ENCODE measurements at regions of chr18 and their contacts with region 1.

Region 1: DNA sequence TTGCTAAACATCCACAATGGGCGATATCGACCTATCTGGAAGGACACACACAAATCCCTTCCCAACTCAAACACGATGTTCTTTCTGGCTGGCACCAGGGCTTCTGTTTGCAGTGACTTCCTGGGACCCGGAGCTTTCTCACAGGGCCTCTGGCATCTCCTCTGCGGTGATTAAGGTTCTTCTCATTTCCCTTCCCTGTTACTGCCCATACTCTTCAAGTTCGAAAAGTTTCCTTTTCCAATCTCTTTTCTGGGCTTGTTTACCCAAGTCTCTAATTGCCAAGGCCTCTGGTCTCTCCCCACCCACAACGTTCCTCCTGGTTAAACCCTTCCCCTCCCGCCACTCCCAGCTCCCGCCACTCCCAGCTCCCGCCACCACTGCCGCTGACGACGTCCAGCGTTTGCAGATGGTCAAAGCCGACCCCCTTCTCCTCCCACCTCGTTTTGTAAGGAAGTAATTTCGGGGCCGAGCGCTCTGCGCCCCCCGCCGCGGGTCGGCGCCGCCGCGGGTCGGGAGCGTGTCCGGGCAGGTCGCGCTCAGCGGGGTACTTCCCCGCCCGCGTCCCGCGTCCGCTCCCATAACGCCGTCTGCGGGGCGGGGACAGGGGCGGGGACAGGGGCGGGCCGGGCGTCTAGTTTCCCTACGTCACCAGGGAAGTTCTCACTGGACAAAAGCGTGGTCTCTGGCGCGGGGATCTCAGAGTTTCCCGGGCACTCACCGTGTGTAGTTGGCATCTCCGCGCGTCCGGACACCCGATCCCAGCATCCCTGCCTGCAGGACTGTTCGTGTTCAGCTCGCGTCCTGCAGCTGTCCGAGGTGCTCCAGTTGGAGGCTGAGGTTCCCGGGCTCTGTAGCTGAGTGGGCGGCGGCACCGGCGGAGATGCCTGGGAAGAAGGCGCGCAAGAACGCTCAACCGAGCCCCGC is at the start of gene PMAIP1:
- DNase-seq: peak; percentile 96
- H3K4me3 Mint-ChIP-seq: peak within 1 kb of the TSS; percentile 96
- H3K27ac Mint-ChIP-seq: peak within 1 kb of the TSS; percentile 99
- H3K4me1 Mint-ChIP-seq: peaks cover 16% of the 10 kb centered on the region
- H3K27me3 Mint-ChIP-seq: no peaks in the 10 kb centered on the region
- CTCF ChIP-seq: no peak
- total RNA-seq, gene PMAIP1: 21.7 and 28.0 TPM in 2 replicates

Region 2: DNA sequence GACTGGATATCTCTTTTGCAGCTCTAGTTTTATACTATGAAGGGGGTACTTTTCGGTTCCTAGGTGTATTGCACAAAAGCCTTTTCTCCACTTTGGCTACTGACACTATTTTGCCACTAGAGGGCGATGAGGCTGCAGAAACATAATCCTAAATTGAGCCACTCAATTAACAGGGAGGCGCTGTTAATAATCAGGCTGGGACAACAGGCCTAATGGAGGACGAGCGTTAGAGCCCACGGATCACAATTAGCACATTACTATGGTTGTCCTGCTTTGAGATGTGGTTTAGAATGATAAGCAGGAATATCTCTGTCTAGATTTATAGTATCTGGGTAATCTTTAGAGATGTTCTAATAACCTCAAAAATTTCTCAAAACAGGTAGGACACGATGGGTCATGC is 62.0 kb before region 1 on chr18:
- CTCF ChIA-PET with region 1: interaction called, 21 read pairs
- POLR2A ChIA-PET with region 1: interaction called, 31 read pairs
- intact Hi-C with region 1: loop called (anchors 1 kb)
- DNase-seq: peak; percentile 82
- H3K4me3 Mint-ChIP-seq: no peak overlapping the region
- H3K27ac Mint-ChIP-seq: no peak overlapping the region
- H3K4me1 Mint-ChIP-seq: peaks cover 1% of the 10 kb centered on the region
- H3K27me3 Mint-ChIP-seq: no peaks in the 10 kb centered on the region
- CTCF ChIP-seq: peak; percentile 83

Region 3: DNA sequence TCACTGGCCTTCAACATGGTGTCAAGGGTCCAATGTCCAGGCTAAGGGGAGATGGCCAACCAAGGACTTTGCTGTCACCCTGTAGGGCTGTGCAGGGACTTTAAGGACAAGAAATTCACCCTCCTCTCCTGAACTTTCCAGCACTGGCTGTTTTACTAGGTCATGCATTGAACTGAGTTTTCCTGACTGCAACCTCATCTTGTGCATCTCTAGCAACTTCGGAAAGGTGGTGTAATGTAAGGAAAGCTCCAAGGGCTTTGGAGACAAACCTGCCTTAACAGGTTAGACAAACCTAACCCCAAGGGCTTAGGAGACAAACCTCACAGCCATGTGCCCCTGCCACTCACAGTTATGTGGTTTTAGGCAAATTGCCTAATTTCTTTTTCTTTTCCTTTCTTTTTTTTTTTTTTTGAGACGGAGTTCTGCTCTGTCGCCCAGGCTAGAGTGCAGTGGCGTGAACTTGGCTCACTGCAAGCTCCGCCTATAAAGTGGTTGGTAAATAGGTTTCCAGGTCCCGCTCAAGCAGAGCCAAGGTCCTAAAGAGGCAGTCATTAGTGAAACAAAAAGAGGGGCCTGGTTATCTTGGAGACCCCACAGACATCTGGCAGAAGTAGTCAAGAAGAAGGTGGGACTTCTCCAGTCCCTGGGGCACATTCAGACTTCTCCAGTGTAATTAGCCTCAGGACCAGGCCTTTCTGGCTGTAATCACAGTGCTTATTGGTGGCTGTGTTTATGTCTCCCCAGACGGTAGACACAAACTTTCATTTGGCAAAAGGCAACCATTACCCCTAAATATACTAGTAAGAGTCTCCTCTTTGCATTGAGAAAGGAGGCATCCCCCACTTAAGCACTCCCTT is 37.4 kb before region 1 on chr18:
- CTCF ChIA-PET with region 1: interaction called, 3 read pairs
- POLR2A ChIA-PET with region 1: interaction called, 40 read pairs
- intact Hi-C with region 1: no loop called
- DNase-seq: peak; percentile 51
- H3K4me3 Mint-ChIP-seq: no peak overlapping the region
- H3K27ac Mint-ChIP-seq: no peak overlapping the region
- H3K4me1 Mint-ChIP-seq: no peaks in the 10 kb centered on the region
- H3K27me3 Mint-ChIP-seq: no peaks in the 10 kb centered on the region
- CTCF ChIP-seq: no peak

Region 4: GRCh38 chr18:59918320-59918755 is 18.8 kb after region 1 on chr18:
- CTCF ChIA-PET with region 1: interaction called, 3 read pairs
- POLR2A ChIA-PET with region 1: interaction called, 34 read pairs
- intact Hi-C with region 1: no loop called
- DNase-seq: peak; percentile 82
- H3K4me3 Mint-ChIP-seq: peak overlapping the region; percentile 59
- H3K27ac Mint-ChIP-seq: peak overlapping the region; percentile 78
- H3K4me1 Mint-ChIP-seq: peaks cover 17% of the 10 kb centered on the region
- H3K27me3 Mint-ChIP-seq: no peaks in the 10 kb centered on the region
- CTCF ChIP-seq: no peak

Region 5: DNA sequence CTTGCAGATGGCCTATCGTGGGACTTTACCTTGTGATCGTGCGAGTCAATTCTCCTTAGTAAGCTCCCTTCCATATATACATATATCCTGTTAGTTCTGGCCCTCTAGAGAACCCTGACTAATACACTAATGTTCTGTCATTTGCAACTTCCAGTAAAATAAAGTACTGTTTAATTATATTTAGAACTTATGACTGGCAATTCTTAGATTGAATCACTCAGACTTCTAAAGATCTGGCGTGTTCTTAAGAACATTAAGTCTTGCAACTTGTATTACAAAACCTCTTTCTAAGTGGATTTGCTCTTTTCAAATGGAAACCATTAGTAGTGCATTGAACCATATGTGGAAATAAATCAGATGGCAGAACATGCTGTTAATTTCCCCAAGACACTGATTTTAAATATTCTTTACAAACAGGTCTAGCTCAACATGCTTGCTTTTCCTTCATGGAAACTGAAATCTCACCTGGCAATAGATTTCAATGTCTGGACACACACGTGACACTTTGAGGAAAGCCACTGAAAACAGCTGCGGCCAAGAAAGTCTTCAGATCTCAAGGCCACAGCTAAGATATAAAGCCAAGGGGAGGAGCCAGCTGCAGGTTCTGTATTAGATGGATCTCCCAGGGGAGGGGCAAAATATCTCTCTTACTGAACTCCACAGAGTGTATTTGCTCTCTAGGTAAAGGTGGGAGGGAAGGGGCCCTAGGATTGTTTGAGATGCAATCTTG is 50.8 kb after region 1 on chr18:
- CTCF ChIA-PET with region 1: interaction called, 4 read pairs
- POLR2A ChIA-PET with region 1: interaction called, 69 read pairs
- intact Hi-C with region 1: loop called (anchors 5 kb)
- DNase-seq: peak; percentile 6
- H3K4me3 Mint-ChIP-seq: no peak overlapping the region
- H3K27ac Mint-ChIP-seq: no peak overlapping the region
- H3K4me1 Mint-ChIP-seq: peaks cover 18% of the 10 kb centered on the region
- H3K27me3 Mint-ChIP-seq: no peaks in the 10 kb centered on the region
- CTCF ChIP-seq: no peak

Region 6: DNA sequence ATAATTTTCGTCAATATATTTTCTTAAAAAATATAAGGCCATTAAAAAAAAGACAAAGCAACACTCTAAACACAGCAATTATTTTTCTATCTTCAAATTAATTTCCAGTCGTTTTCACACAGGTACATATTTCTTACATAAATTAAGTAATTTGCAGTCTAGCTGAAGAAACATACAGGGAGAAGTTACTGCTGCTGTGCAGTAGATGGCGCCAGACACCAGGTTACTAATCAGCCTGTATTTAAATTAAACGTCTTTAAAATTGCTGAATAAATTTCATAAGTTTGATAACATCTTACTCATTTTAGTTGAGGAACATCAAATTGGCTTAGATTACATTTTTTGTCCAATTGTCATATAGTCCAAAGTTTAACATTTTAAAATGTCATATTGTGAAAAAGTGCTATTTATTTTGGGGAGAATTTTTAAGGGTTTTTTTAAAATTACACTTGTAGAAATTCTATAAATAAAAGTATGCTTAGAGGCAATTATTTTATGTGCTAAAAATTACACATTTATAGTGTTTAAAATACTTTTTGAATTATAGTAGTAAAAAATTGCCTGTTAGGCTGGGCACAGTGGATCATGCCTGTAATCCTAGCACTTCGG is 88.6 kb after region 1 on chr18:
- CTCF ChIA-PET with region 1: interaction called, 4 read pairs
- POLR2A ChIA-PET with region 1: interaction called, 8 read pairs
- intact Hi-C with region 1: loop called (anchors 5 kb)
- DNase-seq: peak; percentile 56
- H3K4me3 Mint-ChIP-seq: no peak overlapping the region
- H3K27ac Mint-ChIP-seq: no peak overlapping the region
- H3K4me1 Mint-ChIP-seq: no peaks in the 10 kb centered on the region
- H3K27me3 Mint-ChIP-seq: peaks cover 41% of the 10 kb centered on the region
- CTCF ChIP-seq: peak; percentile 88

Measured in MCF 10A (cell line).